Left ventricle myocardium superior (tissue), 1 donor: ENCODE measurements at regions of chr6 and their contacts with region 1.

Region 1: DNA sequence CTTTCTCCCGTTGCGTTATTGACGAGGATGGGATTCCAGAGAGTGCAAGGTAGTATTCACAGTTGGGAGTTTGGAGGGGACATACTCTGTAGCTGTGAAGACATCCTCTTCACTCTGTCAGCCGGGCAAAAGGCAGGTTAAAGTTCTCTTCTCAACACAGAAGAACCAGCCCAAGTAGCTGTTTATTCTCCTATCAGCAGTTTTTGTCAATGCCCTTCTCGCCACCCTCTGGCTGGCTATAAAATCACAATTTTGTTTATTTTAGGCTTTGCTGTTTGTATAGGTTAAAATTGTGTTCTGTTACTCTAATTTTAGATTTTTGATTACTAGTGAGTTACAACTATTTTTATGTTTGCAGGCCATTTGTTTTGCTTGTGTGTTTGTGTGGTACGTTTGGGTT is 37.9 kb upstream of the MAS1 start:
- DNase-seq: no peak
- ATAC-seq: no peak

Region 2: DNA sequence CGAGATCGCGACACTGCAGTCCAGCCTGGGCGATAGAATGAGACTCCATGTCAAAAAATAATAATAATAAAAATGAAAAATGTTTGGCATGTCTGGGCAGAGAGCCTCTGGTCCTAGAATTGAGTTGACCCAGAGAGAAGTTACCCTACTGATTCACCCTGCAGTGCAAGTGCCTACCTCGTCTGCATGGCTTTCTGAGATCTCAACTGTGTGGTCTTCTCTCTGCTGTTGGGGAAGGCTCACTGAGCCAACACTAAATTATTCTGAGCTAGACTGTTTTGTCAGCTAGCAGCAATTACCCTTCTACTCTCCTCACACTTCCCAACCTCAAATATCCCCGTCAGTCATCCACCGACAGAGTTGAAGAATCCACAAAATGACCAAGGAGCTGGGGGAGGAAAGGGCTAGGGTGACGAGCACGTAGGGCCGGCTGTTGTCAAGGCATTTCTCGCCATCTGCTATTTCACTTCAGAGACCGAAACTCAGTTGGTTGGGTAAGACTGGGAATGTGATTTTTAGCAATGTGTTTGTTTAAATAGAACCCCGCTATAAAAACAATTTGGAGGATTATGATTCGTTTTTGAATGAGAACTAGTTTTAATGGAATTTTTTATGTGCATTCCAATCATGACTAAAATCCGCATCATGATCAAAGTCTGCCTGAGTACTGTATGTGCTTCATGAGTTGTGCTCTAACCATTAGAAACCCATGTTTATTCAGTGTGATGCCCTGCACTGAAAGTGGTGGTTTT is 47.3 kb after region 1 on chr6:
- intact Hi-C with region 1: no loop called
- DNase-seq: no peak
- ATAC-seq: no peak

Region 3: GRCh38 chr6:159941286-159942113 is 88.6 kb after region 1 on chr6:
- intact Hi-C with region 1: loop called (anchors 10 kb)
- DNase-seq: no peak
- ATAC-seq: peak; percentile 42